Dendritic cell treated with granulocyte-macrophage colony-stimulating factor and Interleukin-4, amounts not matched to agents 40 ng/mL and 50 ng/mL, for 4 days (primary cell): ENCODE measurements at regions of chr6 and their contacts with region 1.

Region 1: GRCh38 chr6:7243179-7243981 is 69.6 kb downstream of the SSR1 start:
- H3K4me3 Mint-ChIP-seq: peak overlapping the region; percentile 44
- H3K27ac Mint-ChIP-seq: peak overlapping the region; percentile 92
- H3K4me1 Mint-ChIP-seq: peaks cover 67% of the 10 kb centered on the region
- H3K27me3 Mint-ChIP-seq: no peaks in the 10 kb centered on the region

Region 2: GRCh38 chr6:6724539-6725467 is 518.6 kb before region 1 on chr6:
- intact Hi-C with region 1: loop called (anchors 10 kb)
- H3K4me3 Mint-ChIP-seq: peak overlapping the region; percentile 61
- H3K27ac Mint-ChIP-seq: peak overlapping the region; percentile 94
- H3K4me1 Mint-ChIP-seq: peaks cover 94% of the 10 kb centered on the region
- H3K27me3 Mint-ChIP-seq: no peaks in the 10 kb centered on the region

Region 3: DNA sequence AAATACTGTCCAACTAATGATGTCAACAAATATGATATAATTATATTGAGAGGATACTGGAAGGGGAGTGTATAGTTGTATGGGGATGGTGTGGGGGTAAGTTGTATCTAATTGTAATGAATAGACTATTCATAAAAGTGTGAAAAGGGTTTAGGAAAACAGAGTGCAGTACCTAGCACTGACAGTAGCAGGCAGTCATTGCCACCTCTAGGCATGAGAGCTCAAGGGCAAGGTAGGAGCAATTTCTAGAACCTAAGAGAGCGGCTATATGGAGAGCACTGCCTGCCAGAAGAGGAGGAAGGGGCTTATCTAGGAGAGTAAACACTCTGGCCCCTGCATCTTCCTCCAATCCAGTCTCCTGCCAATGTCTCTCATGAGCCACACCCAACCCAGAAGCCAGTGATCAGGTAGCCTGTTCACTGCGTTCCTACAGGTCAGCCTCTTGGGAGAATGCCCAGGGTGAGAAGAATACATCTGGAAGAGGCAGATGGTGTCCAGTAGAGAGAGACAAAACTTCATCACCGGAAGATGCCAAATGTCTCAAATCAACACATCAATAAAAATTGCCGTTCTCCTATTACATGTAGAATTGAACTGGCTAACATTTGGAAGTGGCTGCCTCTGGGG is 454.9 kb before region 1 on chr6:
- intact Hi-C with region 1: loop called (anchors 10 kb)
- H3K4me3 Mint-ChIP-seq: no peak overlapping the region
- H3K27ac Mint-ChIP-seq: peak overlapping the region; percentile 77
- H3K4me1 Mint-ChIP-seq: peaks cover 90% of the 10 kb centered on the region
- H3K27me3 Mint-ChIP-seq: no peaks in the 10 kb centered on the region

Region 4: GRCh38 chr6:7107578-7108195 is 135.7 kb before region 1 on chr6 and contains the start of gene RREB1:
- intact Hi-C with region 1: loop called (anchors 5 kb)
- H3K4me3 Mint-ChIP-seq: peak within 1 kb of the TSS; percentile 98
- H3K27ac Mint-ChIP-seq: peak within 1 kb of the TSS; percentile 99
- H3K4me1 Mint-ChIP-seq: peaks cover 36% of the 10 kb centered on the region
- H3K27me3 Mint-ChIP-seq: no peaks in the 10 kb centered on the region

Region 5: GRCh38 chr6:7276199-7276524 is 32.8 kb after region 1 on chr6:
- intact Hi-C with region 1: loop called (anchors 5 kb)
- H3K4me3 Mint-ChIP-seq: no peak overlapping the region
- H3K27ac Mint-ChIP-seq: peak overlapping the region; percentile 43
- H3K4me1 Mint-ChIP-seq: peaks cover 48% of the 10 kb centered on the region
- H3K27me3 Mint-ChIP-seq: no peaks in the 10 kb centered on the region